Left lung (tissue), 14 donors: ENCODE measurements at regions of chr22 and their contacts with region 1.

Region 1: GRCh38 chr22:28923826-28924732 is 40.7 kb downstream of the ZNRF3 start:
- DNase-seq: peak; percentile 31 to 82 (median 78)
- ATAC-seq: peak; percentile 84
- H3K4me3 ChIP-seq: no peak overlapping the region
- H3K27ac ChIP-seq: peak overlapping the region in 1 of 2 donors; percentile 29
- H3K4me1 ChIP-seq: peaks cover 9 to 23% of the 10 kb centered on the region in 2 donors
- H3K27me3 ChIP-seq: no peaks in the 10 kb centered on the region
- CTCF ChIP-seq: no peak

Region 2: DNA sequence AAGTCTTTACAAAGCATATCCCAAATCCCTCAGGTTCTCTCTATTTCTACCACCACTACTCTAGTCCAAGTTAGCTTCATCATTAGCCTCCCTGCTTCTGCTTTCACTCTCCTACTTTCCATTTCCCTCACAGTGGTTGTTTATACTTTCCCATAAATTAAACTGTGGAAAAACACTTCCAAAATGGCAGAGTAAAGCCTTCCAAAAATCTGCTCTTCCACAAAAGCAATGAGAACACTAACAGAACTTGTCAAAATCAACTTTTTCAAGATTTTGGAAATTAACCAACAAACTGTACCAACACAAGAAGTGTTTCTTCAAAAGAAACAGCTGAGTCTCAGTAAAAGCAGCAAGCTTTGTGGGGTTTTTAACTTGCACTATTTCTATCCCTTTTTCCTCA is 316.3 kb before region 1 on chr22:
- intact Hi-C with region 1: no loop called
- DNase-seq: peak in 2 of 4 donors; percentile 82 to 85
- ATAC-seq: peak; percentile 50
- H3K4me3 ChIP-seq: no peak overlapping the region
- H3K27ac ChIP-seq: no peak overlapping the region
- H3K4me1 ChIP-seq: no peaks in the 10 kb centered on the region
- H3K27me3 ChIP-seq: no peaks in the 10 kb centered on the region
- CTCF ChIP-seq: no peak

Region 3: DNA sequence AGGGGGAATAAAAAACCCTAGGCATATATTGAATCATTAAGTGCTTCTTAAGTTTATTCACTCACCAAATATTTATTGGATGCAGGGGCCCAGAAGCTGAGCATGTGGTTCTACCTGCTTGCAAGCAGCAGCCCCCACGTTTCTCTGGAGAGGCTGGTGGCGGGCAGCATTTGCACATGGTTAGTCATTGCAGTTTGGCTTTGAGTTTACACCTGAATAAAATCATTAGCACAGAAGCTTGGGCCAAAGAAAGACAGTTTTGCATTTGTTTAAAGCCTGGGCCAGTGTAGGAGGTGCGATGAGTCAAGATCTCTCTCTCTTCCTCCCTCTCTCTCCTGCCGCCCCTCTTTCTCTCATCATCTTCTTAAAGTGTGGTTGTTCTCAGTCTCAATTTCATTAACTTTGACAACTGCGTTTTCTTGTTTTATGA is 65.0 kb after region 1 on chr22:
- intact Hi-C with region 1: loop called in 1 of 2 experiments (anchors 10 kb)
- DNase-seq: no peak
- ATAC-seq: peak; percentile 23
- H3K4me3 ChIP-seq: no peak overlapping the region
- H3K27ac ChIP-seq: peak overlapping the region; percentile 13 to 39
- H3K4me1 ChIP-seq: peaks cover 9 to 14% of the 10 kb centered on the region in 2 donors
- H3K27me3 ChIP-seq: no peaks in the 10 kb centered on the region
- CTCF ChIP-seq: no peak